A673 (cell line): ENCODE measurements at regions of chr9 and their contacts with region 1.

Region 1: DNA sequence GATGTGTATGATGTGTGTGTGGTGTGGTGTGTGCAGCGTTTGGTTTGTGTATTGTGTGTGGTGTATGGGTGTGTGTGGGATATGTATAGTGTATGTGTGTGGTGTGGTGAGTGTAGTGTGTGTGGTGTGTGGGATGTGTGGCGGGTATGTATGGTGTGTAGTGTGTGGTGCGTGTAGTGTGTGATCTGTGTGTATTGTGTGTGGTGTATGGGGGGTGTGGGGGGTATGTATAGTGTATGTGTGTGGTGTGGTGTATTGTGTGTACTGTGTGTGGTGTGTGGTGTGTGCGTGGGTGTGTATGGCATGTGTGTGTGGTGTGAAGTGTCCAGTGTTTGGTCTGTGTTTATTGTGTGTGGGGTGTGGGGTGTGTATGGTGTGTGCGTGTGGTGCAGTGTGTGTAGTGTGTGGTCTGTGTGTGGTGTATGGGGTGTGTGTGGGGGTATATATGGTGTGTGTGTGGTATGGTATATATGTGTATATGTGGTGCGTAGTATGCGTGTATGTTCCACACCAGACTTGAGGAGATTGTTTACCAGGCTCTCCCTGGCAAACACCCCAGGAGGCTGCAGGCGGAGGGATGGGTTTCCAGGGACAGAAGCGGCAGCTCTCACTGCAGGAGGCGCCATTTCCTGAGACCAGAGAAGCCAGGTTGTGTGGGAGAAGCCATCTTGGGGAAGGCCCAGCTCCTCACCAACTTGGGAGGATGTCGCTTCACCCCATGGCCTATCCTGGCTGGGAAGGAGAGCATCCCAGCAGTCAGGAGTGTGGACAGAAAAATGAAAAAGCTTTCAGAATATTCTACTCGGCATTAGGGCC is 138.1 kb downstream of the NXNL2 start:
- DNase-seq: peak; percentile 71
- H3K4me3 ChIP-seq: no peak overlapping the region
- H3K27ac ChIP-seq: no peak overlapping the region
- H3K4me1 ChIP-seq: peaks cover 14% of the 10 kb centered on the region
- H3K27me3 ChIP-seq: no peaks in the 10 kb centered on the region
- CTCF ChIP-seq: peak; percentile 41

Region 2: DNA sequence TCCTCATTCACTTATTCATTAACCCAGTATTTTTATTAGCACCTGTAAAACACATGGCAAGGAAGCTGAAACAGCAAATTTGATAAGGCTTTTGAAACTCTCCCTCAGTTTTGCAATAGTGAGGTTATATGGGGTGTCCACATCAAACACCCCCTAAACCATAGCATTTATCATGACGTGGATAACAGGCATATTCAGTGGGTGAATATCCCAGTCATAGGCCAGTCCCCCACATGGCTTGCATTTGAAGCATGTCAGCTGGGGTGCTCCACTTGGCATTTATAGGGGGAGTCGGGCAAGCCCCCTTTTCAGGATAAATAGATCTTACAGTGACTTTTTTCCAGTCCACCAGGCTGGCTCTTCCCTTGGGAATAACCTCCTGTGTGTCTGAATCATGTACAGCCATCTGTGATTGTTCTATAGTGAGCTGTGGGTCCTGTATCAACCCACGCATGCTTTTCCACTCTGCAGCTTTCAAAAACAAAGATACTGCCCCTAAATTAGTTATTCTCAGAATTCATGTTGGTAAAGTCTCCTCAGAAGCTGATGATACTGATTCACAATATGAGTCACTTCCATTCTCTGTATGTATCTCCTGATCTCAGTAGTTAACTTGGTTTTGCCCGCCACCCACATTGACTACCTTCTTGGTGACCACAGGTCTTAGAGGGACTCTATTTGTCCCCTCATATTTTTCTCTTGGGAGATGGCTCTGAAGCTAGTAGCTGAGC is 369.2 kb before region 1 on chr9:
- CTCF ChIA-PET with region 1: no interaction called
- POLR2A ChIA-PET with region 1: interaction called, 11 read pairs
- intact Hi-C with region 1: no loop called
- DNase-seq: peak; percentile 15
- H3K4me3 ChIP-seq: no peak overlapping the region
- H3K27ac ChIP-seq: no peak overlapping the region
- H3K4me1 ChIP-seq: no peaks in the 10 kb centered on the region
- H3K27me3 ChIP-seq: no peaks in the 10 kb centered on the region
- CTCF ChIP-seq: no peak

Region 3: GRCh38 chr9:88991066-88992034 is 318.3 kb after region 1 on chr9 and contains the start of gene S1PR3:
- CTCF ChIA-PET with region 1: no interaction called
- POLR2A ChIA-PET with region 1: no interaction called
- intact Hi-C with region 1: no loop called
- DNase-seq: peak; percentile 60
- H3K4me3 ChIP-seq: peak within 1 kb of the TSS; percentile 71
- H3K27ac ChIP-seq: peak within 1 kb of the TSS; percentile 61
- H3K4me1 ChIP-seq: peaks cover 50% of the 10 kb centered on the region
- H3K27me3 ChIP-seq: no peaks in the 10 kb centered on the region
- CTCF ChIP-seq: no peak; the same call in 1 of the 2 replicates
- total RNA-seq, gene S1PR3: 42.9 and 50.9 TPM in 2 replicates